MCF 10A (cell line): ENCODE measurements at regions of chr4 and their contacts with region 1.

Region 1: GRCh38 chr4:6795821-6796220 is 13.3 kb downstream of the KIAA0232 start:
- DNase-seq: no peak
- H3K4me3 Mint-ChIP-seq: no peak overlapping the region
- H3K27ac Mint-ChIP-seq: no peak overlapping the region
- H3K4me1 Mint-ChIP-seq: peaks cover 41% of the 10 kb centered on the region
- H3K27me3 Mint-ChIP-seq: no peaks in the 10 kb centered on the region
- CTCF ChIP-seq: no peak

Region 2: DNA sequence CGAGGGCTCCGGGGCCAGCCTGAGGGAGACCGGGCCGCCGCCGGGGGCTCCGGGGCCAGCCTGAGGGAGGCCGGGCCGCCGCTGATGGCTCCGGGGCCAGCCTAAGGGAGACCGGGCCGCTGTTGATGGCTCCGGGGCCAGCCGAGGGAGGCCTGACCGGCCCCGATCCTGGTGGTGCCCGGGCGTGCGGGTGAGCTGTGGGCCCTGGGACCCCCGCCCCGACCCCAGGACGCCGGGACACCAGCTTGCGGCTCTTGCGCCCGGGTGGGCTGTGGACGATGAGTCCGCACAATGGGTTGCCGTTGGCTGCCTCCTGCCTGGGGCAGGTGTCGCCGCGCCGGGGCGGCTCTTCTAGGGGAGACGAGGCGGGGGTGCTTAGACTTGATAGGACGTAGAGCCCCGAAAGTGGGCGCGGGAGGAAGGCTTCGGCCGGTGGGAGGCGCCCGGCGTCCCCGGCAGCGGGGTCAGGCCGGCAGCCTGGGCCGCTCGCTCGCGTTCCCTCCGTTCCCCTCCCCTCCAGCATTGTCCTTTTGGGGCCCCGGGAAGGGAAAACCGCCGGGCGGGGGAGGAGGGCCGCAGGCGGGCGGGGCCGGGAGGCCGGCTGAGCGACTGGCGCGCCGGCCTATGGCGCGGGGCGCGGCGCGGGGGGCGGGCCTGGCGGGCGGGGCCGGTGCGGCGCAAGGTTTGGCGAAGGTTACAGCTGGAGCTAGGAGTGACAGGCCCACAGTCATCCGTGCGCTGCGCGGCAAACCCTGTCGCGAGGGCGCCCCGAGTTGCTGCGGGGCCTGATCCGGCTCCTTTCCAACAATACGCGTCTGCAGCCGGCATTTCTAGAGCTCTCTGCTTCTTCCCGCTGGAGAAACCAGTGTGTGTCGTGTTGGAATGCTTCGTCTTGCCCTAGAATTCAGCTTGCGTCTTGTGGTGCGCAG is 12.5 kb before region 1 on chr4:
- CTCF ChIA-PET with region 1: interaction called, 6 read pairs
- POLR2A ChIA-PET with region 1: interaction called, 15 read pairs
- intact Hi-C with region 1: no loop called
- DNase-seq: peak; percentile 88
- H3K4me3 Mint-ChIP-seq: peak overlapping the region; percentile 78
- H3K27ac Mint-ChIP-seq: no peak overlapping the region
- H3K4me1 Mint-ChIP-seq: peaks cover 22% of the 10 kb centered on the region
- H3K27me3 Mint-ChIP-seq: no peaks in the 10 kb centered on the region
- CTCF ChIP-seq: no peak